ENCODE measurements at regions of chr17 and their contacts with region 1.

Region 1: DNA sequence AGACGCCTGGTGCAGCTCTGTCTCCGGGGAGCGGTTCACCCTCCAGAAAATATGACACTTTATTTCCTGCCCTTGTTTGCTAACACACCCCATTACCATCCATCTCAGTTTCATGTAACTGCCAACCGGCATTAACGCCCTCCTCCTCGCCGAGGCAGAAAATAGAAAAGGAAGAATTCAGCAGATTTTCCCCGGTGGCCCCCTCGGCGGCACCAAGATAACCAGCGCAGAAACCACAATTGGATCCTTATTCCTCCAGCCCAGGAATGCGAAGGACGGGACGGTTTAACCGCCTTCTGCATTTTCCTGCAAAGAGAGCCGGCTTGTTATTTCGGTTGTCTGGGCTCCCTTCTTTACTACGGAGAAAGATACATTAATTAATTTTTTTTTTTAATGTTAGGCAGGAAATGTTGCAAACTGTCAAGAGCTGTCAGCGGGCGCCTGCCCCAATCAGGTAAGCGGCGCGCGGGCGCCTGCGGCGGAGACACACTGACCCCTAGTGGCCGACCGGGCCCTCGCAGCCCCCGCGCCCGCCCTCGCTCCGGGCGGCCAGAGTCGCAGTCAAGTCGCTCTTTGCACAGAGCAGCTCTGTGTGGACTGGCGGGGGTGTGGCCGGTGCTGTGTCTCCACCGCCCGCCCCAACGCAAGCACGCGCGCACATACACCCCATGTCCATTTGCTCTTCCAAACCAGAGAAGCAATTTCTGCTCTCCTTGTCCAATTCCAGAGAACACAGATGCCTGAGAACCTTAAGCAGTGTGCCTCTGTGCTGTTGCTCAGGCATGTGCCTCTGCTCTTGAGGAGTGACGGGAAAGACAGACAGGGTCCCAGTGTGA is 53.6 kb downstream of the C17orf67 start:
- DNase-seq: peak; percentile 79
- H3K4me3 Mint-ChIP-seq: peak overlapping the region; percentile 82
- H3K27ac Mint-ChIP-seq: no peak overlapping the region
- H3K4me1 Mint-ChIP-seq: peaks cover 32% of the 10 kb centered on the region
- H3K27me3 Mint-ChIP-seq: no peaks in the 10 kb centered on the region
- CTCF ChIP-seq: peak; percentile 94

Region 2: DNA sequence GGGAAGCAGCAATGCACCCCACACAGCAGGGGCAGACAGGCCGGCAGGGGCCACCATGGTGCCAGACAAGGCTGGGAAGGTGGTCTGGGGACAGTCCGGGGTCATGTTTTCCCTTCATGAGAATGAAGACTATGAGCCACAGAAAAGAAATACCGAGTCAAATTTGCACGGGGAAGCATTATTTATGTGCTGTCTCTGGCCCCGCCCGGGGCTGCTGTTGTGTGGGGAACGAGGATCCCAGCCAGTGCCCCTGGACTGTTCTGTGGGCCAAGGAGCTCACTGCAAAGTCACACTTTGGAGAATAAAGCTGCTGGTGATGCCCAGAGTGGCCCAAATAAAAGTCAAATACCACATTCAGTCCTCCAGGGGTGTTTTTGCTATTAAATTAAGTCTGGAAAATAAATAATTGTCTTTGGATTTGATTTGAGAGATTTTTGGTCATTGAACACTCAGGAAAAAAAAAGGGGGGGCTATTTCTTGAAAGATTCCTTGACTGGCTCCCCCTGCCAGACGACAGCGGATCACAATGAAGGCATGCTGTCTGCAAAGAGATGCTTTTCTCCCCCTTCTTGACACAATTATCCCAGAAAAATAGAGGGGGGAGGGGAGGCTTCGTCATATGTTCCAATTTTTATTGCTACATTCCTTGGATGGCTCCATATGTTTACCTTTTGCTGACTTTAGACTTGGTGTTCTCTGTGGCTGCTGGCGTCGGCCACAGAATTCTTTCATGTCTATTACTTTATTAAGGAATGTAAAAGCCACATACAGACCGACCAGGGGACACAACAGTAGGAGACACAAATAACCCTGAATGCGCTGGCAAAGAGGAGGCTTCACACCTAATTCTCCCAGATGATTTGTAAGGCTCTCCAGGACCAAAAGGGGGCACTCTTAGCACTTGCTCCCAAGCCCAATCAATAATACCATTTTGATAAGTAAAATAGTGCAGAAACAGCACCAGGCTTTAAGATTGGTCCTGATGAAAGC is 654.0 kb before region 1 on chr17:
- CTCF ChIA-PET with region 1: interaction called, 4 read pairs
- POLR2A ChIA-PET with region 1: no interaction called
- intact Hi-C with region 1: loop called (anchors 1 kb)
- DNase-seq: peak; percentile 77
- H3K4me3 Mint-ChIP-seq: no peak overlapping the region
- H3K27ac Mint-ChIP-seq: no peak overlapping the region
- H3K4me1 Mint-ChIP-seq: no peaks in the 10 kb centered on the region
- H3K27me3 Mint-ChIP-seq: no peaks in the 10 kb centered on the region
- CTCF ChIP-seq: peak; percentile 73

Region 3: DNA sequence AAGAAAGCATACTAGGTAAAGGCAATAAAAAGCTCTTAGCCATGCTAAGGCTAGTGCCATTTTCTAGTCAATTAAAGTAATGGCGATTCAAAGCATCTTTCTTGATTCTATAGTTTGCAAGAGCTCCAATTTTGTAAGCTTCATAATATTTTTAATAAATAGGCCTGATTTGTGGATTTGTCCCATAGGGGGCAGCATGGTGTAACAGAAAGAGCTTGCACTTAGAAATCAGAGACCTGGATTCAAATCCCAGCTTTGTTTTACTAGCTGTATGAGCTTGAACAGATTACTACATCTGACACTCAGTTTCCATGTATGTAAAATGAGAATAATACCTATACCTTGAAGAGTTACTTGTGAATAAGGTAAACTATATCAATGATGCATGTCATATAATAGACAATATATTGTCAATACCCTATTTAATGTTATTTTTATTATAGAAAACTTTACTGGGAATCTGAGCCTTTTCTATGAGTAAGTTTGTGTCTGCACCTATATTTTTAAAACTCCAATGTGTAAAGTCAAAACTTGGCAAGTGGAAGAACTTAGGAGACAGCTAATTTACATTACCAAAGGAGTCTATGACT is 280.2 kb before region 1 on chr17:
- CTCF ChIA-PET with region 1: interaction called, 6 read pairs
- POLR2A ChIA-PET with region 1: no interaction called
- intact Hi-C with region 1: loop called (anchors 2 kb)
- DNase-seq: peak; percentile 56
- H3K4me3 Mint-ChIP-seq: no peak overlapping the region
- H3K27ac Mint-ChIP-seq: no peak overlapping the region
- H3K4me1 Mint-ChIP-seq: no peaks in the 10 kb centered on the region
- H3K27me3 Mint-ChIP-seq: peaks cover 8% of the 10 kb centered on the region
- CTCF ChIP-seq: peak; percentile 35

Region 4: GRCh38 chr17:56581635-56582627 is 198.2 kb before region 1 on chr17:
- CTCF ChIA-PET with region 1: interaction called, 11 read pairs
- POLR2A ChIA-PET with region 1: no interaction called
- intact Hi-C with region 1: no loop called
- DNase-seq: no peak
- H3K4me3 Mint-ChIP-seq: no peak overlapping the region
- H3K27ac Mint-ChIP-seq: no peak overlapping the region
- H3K4me1 Mint-ChIP-seq: no peaks in the 10 kb centered on the region
- H3K27me3 Mint-ChIP-seq: peaks cover 14% of the 10 kb centered on the region
- CTCF ChIP-seq: no peak

Region 5: DNA sequence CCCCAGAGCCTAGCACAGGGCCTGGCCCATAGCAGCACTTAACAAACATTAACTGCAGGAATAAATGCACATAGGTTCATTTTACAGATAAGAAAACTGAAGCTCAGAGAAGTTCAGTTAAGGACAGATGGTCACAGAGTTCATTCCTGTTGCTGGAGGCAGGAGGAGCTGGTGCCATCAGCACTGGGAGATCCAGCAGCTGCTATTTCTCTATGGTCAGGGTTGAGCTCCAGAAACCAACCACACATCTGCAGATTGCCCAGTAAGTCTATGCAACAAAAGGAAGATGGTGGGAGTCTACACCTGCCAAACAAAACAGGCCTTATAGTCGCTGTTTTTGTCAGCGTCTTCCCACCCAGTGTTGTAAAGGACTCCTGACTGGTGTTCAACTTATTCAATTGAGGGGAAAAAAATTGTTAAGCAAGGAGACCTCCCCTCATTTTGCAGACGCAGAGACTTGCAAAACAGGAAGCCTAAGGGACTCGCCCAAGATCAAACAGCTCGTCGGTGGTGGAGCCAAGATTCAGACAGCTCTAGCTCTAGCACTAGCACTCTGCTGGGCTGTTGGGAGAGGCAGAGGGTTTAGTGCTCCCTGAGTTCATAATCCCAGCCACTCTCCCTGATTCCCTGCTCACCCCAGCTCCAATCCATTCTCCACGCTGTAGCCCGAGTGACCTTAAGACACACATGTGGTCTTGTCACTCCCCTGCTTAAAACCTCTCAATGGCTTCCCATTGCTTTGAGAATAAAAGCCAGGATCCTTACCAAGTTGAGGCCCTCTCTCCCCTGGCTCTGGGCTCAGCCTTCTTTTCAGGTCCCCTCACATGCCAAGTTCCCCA is 177.6 kb before region 1 on chr17:
- CTCF ChIA-PET with region 1: interaction called, 14 read pairs
- POLR2A ChIA-PET with region 1: no interaction called
- intact Hi-C with region 1: no loop called
- DNase-seq: no peak
- H3K4me3 Mint-ChIP-seq: no peak overlapping the region
- H3K27ac Mint-ChIP-seq: no peak overlapping the region
- H3K4me1 Mint-ChIP-seq: no peaks in the 10 kb centered on the region
- H3K27me3 Mint-ChIP-seq: no peaks in the 10 kb centered on the region
- CTCF ChIP-seq: no peak

Region 6: GRCh38 chr17:56762988-56763387 is 17.1 kb before region 1 on chr17:
- CTCF ChIA-PET with region 1: interaction called, 14 read pairs
- POLR2A ChIA-PET with region 1: no interaction called
- intact Hi-C with region 1: no loop called
- DNase-seq: no peak
- H3K4me3 Mint-ChIP-seq: no peak overlapping the region
- H3K27ac Mint-ChIP-seq: no peak overlapping the region
- H3K4me1 Mint-ChIP-seq: no peaks in the 10 kb centered on the region
- H3K27me3 Mint-ChIP-seq: no peaks in the 10 kb centered on the region
- CTCF ChIP-seq: no peak